GM23248 (cell line): ENCODE measurements at regions of chr7 and their contacts with region 1.

Region 1: DNA sequence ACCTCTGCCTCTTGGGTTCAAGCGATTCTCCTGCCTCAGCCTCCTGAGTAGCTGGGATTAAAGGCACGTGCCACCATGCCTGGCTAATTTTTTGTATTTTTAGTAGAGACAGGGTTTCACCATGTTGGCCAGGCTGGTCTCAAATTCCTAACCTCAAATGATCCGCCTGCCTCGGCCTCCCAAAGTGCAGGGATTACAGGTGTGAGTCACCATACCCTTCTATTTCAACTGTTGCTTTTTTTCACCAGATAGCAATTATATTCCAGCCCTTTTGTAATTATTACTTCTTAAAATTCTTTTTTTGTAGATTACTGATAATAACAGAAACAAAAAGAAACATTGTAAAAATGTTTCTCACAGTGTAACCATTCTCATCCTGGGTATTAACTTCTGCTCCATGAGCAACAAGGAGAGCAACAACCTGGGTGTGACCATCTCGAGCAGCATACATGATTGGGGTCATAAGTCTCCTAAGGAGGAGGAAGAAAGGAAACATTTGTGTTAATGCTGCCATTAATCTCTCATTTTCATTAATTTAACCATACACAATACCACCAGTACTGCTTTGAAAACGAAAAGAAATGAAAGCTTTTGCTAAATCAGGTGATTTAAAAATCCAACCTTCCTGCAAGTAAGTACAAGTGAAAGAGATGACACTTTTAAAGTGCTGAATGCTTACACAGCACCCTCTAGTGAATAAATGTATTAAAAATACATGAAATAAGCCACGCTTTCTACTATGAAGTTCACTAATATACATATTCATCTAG is 41.8 kb downstream of the ASZ1 start:
- DNase-seq: peak; percentile 63
- H3K4me3 ChIP-seq: no peak overlapping the region
- H3K27ac ChIP-seq: no peak overlapping the region
- H3K4me1 ChIP-seq: peaks cover 10% of the 10 kb centered on the region
- H3K27me3 ChIP-seq: no peaks in the 10 kb centered on the region

Region 2: DNA sequence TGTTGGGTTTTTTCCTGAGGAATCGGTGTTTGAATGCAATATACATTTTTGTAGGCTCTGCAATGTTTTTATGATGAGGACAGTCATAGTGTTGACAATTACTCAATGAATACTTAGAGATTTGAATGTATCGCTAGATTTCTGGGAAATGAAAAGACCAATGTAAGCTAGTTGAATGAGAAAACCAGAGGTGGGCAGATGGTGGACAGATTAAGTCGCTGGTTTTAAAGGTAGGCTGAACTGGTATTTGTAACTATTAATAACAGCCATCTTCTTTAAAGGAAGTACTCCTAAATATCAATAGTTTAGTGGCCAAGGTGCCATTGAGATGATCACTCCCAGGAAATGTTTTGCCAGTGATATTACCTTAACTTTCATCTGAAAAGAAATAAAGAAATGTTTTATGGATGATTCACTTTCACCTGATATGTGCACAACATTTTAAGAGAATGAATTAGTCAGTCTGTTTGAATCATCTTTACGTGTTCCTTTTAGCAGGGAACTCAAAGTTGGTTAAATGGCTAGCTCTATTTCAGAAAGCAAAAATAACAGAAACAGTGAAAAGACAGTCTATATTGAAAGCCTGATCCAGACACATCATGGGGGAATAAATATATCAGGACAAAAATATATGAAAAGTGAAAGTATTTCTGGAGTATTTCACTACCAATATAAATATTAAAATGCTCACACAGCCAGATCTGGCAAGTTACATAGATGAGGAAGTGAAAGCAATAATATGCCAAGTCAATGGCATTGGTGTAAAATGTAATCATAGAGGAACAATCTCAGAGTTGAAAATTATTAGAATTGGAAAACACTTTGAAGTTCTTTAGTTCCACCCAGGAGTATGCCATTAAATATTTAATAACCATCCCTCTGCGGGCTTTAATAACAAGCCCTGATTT is 692.9 kb before region 1 on chr7:
- in situ Hi-C with region 1: no loop called
- DNase-seq: peak; percentile 75
- H3K4me3 ChIP-seq: peak overlapping the region; percentile 54
- H3K27ac ChIP-seq: peak overlapping the region; percentile 51
- H3K4me1 ChIP-seq: peaks cover 59% of the 10 kb centered on the region
- H3K27me3 ChIP-seq: no peaks in the 10 kb centered on the region

Region 3: DNA sequence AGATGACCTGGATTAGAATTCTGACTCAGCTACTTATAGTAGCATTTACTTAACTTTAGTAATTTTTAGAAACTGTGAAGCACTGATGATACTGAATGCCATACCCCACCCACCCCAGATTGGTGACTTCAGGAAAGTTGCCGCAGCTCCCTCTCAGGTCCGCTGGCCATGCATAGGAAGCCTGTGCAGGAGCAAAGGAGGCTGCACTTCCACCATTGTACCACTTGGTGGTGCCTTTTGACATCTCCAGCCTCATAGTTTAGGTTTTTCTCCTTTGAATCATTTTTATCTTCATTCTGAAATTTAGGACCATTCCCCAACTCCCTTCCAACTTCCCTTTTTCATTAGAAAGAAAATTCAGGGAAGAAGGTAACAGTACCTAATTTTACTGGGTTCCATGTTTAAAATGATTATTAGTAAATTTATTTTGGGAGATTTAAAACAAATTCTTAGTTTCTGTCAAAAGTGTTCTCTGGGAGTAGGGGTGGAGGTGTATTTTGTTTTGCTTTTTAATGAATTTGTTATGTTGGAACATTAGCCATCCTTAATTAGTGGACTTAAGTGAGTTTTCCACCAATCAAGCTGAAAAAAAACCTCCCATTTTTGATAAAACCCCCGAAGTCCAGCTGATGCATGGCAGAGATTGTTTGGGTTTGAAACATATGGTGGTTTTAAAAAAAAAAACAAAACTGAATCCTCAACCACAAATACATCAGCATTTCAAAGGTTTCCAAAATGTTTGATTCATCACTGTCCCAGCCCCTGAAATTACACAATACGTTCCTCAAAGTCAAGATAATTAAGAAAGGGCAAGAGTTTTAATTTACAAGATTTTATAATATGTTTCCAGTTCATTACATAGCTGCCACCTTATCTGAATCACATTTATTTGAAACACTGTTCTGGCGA is 172.3 kb before region 1 on chr7:
- in situ Hi-C with region 1: loop called (anchors 10 kb)
- DNase-seq: peak; percentile 73
- H3K4me3 ChIP-seq: 0 out of 2 replicates have a peak overlapping the region, but pooled peaks have one; percentile 10
- H3K27ac ChIP-seq: peak overlapping the region; percentile 25; the same call in 1 of the 2 replicates
- H3K4me1 ChIP-seq: peaks cover 28% of the 10 kb centered on the region
- H3K27me3 ChIP-seq: no peaks in the 10 kb centered on the region

Region 4: GRCh38 chr7:117323851-117324701 is 61.4 kb before region 1 on chr7:
- in situ Hi-C with region 1: no loop called
- DNase-seq: peak; percentile 58
- H3K4me3 ChIP-seq: peak overlapping the region; percentile 74
- H3K27ac ChIP-seq: no peak overlapping the region
- H3K4me1 ChIP-seq: peaks cover 6% of the 10 kb centered on the region; the same call in 1 of the 2 replicates
- H3K27me3 ChIP-seq: peaks cover 35% of the 10 kb centered on the region